Colonic mucosa (tissue), 4 donors: ENCODE measurements at regions of chr10 and their contacts with region 1.

Region 1: DNA sequence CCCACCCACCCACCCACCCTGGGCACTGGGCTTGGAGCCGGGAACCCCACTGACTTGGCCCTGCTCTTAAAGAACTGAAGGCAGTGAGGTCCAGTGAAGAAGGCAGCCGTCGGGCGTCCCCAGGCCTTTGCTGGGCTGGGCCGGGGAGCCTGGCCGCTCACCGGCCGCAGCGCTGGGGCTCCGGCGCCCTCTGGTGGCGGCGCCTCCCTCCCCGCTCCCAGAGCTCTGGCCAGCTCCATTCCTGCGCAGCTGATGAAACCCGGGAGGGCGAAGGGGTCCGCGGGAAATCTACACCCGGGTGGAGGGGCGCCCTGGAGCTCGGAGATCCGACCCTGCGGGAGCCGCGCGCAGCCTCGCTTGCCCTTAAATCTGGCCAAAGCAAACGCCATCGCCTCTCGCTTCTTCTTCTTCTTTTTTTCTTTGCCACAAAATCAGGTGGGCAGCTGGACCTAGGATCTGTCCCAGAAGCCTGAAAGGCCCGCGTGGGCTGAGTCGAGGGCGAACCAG is 1.7 kb upstream of the CXCL12 start:
- DNase-seq: peak; percentile 46
- H3K4me3 ChIP-seq: no peak overlapping the region
- H3K27ac ChIP-seq: no peak overlapping the region
- H3K4me1 ChIP-seq: no peaks in the 10 kb centered on the region
- H3K27me3 ChIP-seq: peaks cover 21% of the 10 kb centered on the region
- CTCF ChIP-seq: peak; percentile 84

Region 2: GRCh38 chr10:43644252-43644651 is 742.3 kb before region 1 on chr10:
- intact Hi-C with region 1: no loop called
- DNase-seq: no peak
- H3K4me3 ChIP-seq: no peak overlapping the region
- H3K27ac ChIP-seq: no peak overlapping the region
- H3K4me1 ChIP-seq: no peaks in the 10 kb centered on the region
- H3K27me3 ChIP-seq: no peaks in the 10 kb centered on the region
- CTCF ChIP-seq: no peak

Region 3: GRCh38 chr10:43671656-43672531 is 714.7 kb before region 1 on chr10:
- intact Hi-C with region 1: loop called (anchors 2 kb)
- DNase-seq: peak; percentile 55
- H3K4me3 ChIP-seq: no peak overlapping the region
- H3K27ac ChIP-seq: no peak overlapping the region
- H3K4me1 ChIP-seq: no peaks in the 10 kb centered on the region
- H3K27me3 ChIP-seq: no peaks in the 10 kb centered on the region
- CTCF ChIP-seq: peak; percentile 61

Region 4: GRCh38 chr10:43689955-43690771 is 696.4 kb before region 1 on chr10:
- intact Hi-C with region 1: loop called (anchors 5 kb)
- DNase-seq: peak; percentile 87
- H3K4me3 ChIP-seq: peak overlapping the region; percentile 35
- H3K27ac ChIP-seq: peak overlapping the region; percentile 5
- H3K4me1 ChIP-seq: no peaks in the 10 kb centered on the region
- H3K27me3 ChIP-seq: no peaks in the 10 kb centered on the region
- CTCF ChIP-seq: peak; percentile 86

Region 5: DNA sequence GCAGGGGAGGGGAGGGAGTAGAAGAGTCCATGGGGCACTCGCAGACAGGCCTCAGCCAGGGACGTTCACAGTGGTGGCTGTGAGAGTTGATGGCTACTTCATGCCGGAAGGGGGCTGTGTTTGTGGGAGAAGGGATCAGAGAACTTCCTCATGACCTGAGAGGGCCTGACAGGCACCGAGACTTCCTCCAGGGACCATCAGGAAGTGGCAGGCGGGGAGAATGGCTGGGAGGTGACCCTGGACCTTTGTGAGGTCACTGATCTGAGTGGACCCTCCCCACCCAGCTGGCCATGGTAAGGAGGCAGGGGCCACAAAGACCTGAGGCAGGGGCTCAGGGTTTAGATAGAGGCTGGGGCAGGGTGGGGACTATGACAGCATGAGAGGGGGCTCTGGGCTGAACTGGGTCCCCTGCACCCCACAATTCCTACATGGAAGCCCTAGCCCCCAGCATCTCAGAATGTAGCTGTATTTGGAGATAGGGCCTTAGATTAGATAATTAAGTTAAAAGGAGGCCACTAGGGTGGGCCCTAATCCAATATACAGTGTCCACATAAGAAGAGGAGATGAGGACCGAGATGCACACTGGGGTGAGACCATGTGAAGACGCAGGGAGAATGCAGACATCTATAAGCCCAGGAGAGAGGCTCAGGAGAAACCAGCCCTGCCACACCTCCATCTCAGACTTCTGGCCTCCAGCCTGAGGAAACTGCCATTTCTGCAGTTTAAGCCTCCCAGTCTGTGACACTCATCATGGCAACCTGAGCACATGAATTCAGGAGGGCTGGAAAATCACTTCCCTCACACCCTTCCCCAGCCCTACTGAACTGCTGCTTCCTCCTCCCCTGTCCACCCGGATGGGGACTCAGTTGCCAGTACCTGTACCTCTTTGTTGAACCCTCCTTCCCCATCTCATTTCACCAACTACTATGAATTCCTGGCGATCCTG is 464.0 kb before region 1 on chr10:
- intact Hi-C with region 1: loop called (anchors 10 kb)
- DNase-seq: no peak
- H3K4me3 ChIP-seq: no peak overlapping the region
- H3K27ac ChIP-seq: no peak overlapping the region
- H3K4me1 ChIP-seq: no peaks in the 10 kb centered on the region
- H3K27me3 ChIP-seq: no peaks in the 10 kb centered on the region
- CTCF ChIP-seq: no peak

Region 6: GRCh38 chr10:44310762-44311562 is 75.6 kb before region 1 on chr10:
- intact Hi-C with region 1: loop called (anchors 5 kb)
- DNase-seq: peak; percentile 79
- H3K4me3 ChIP-seq: peak overlapping the region; percentile 16
- H3K27ac ChIP-seq: no peak overlapping the region
- H3K4me1 ChIP-seq: peaks cover 6% of the 10 kb centered on the region
- H3K27me3 ChIP-seq: no peaks in the 10 kb centered on the region
- CTCF ChIP-seq: peak; percentile 81

Region 7: GRCh38 chr10:44857363-44858016 is 470.9 kb after region 1 on chr10:
- intact Hi-C with region 1: loop called (anchors 5 kb)
- DNase-seq: peak; percentile 50
- H3K4me3 ChIP-seq: no peak overlapping the region
- H3K27ac ChIP-seq: no peak overlapping the region
- H3K4me1 ChIP-seq: no peaks in the 10 kb centered on the region
- H3K27me3 ChIP-seq: no peaks in the 10 kb centered on the region
- CTCF ChIP-seq: peak; percentile 99